ENCODE measurements at regions of chr6 and their contacts with region 1.

Region 1: DNA sequence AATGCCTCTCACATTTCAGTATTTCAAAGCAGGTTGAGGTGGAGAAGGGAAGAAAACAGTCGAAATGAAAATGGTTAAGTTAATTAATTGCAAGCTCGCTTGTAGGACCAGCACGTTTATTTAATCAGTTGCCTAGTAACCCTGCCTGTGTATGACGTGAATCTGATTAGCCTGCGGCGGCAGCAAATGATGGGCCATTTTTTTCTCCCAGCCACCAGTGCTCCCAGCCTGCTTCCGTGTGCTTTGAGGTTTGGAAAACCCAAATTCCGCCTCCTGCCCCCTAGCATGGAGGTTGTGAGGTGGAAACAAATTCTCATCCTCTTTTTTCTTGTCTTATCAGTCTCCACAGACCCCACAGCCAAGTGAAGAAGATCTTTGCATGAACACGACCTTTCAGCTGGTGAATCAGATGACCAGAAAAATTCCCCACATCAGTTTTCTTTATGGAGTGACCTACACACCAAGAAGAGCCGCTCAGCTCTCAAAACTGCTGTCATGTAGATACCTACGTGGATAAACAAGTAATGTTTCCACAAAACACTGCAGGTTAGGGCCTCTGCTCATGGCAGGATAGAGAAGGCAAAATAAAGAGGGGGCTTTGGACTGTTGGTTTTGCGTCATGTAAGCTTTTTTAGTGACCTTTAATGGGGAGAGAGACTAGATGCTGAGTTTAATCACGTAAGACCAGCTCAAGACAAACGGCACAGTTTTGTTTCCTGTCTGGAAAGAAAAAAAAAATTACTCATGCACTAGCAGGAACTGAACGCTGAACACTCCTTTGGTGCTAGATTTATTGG is 572.9 kb upstream of the NOX3 start:
- DNase-seq: no peak
- ATAC-seq: peak in 1 of 8 donors; percentile 28
- H3K4me3 ChIP-seq: no peak overlapping the region
- H3K27ac ChIP-seq: no peak overlapping the region
- H3K4me1 ChIP-seq: peaks cover 0 to 4% (median 0%) of the 10 kb centered on the region in 9 donors
- H3K27me3 ChIP-seq: no peaks in the 10 kb centered on the region
- CTCF ChIP-seq: no peak

Region 2: GRCh38 chr6:155611742-155612141 is 416.8 kb before region 1 on chr6:
- intact Hi-C with region 1: no loop called
- DNase-seq: no peak
- ATAC-seq: no peak
- H3K4me3 ChIP-seq: no peak overlapping the region
- H3K27ac ChIP-seq: no peak overlapping the region
- H3K4me1 ChIP-seq: no peaks in the 10 kb centered on the region
- H3K27me3 ChIP-seq: no peaks in the 10 kb centered on the region
- CTCF ChIP-seq: no peak

Region 3: DNA sequence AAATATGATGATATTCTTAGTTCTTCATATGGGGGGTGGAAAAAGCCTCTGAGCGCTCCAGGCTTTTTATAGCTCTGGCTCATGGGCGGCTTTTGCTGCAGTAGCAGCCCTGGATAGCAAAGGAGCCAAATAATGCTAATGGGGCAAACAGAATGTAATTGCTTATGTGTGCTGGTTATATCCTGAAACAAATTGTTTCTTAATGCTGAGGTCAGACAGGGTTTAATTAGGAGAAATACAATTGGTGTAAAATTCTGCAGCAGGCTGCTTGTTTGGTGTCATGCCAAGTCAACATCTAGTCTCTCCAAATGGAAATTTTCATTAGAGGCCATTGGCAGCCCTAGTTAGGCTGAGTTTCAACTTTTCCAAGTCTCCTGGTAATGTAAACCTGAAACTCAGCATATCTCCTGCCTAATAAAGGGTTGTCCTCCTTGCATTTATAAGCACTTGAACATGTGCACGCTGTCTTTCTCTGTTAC is 42.8 kb before region 1 on chr6:
- intact Hi-C with region 1: no loop called
- DNase-seq: peak in 1 of 2 donors; percentile 54
- ATAC-seq: peak; percentile 85 to 97 (median 92)
- H3K4me3 ChIP-seq: no peak overlapping the region
- H3K27ac ChIP-seq: peak overlapping the region in 7 of 10 donors; percentile 14 to 67 (median 50)
- H3K4me1 ChIP-seq: peaks cover 5 to 30% (median 11%) of the 10 kb centered on the region in 9 donors
- H3K27me3 ChIP-seq: no peaks in the 10 kb centered on the region
- CTCF ChIP-seq: no peak

Region 4: GRCh38 chr6:156060013-156060412 is 31.5 kb after region 1 on chr6:
- intact Hi-C with region 1: loop called in 1 of 10 experiments (anchors 1 kb)
- DNase-seq: no peak
- ATAC-seq: no peak
- H3K4me3 ChIP-seq: no peak overlapping the region
- H3K27ac ChIP-seq: no peak overlapping the region
- H3K4me1 ChIP-seq: peaks cover 0 to 14% (median 6%) of the 10 kb centered on the region in 9 donors
- H3K27me3 ChIP-seq: no peaks in the 10 kb centered on the region
- CTCF ChIP-seq: no peak

Region 5: GRCh38 chr6:156250593-156250992 is 222.1 kb after region 1 on chr6:
- intact Hi-C with region 1: no loop called
- DNase-seq: no peak
- ATAC-seq: no peak
- H3K4me3 ChIP-seq: no peak overlapping the region
- H3K27ac ChIP-seq: no peak overlapping the region
- H3K4me1 ChIP-seq: no peaks in the 10 kb centered on the region
- H3K27me3 ChIP-seq: no peaks in the 10 kb centered on the region
- CTCF ChIP-seq: no peak